Activated CD4-positive, alpha-beta memory T cell treated with anti-CD3 and anti-CD28 coated beads, Interleukin-2, amount 10 ng/mL, durations not matched to agents 7 days and 5 days (primary cell): ENCODE measurements at regions of chr1 and their contacts with region 1.

Region 1: DNA sequence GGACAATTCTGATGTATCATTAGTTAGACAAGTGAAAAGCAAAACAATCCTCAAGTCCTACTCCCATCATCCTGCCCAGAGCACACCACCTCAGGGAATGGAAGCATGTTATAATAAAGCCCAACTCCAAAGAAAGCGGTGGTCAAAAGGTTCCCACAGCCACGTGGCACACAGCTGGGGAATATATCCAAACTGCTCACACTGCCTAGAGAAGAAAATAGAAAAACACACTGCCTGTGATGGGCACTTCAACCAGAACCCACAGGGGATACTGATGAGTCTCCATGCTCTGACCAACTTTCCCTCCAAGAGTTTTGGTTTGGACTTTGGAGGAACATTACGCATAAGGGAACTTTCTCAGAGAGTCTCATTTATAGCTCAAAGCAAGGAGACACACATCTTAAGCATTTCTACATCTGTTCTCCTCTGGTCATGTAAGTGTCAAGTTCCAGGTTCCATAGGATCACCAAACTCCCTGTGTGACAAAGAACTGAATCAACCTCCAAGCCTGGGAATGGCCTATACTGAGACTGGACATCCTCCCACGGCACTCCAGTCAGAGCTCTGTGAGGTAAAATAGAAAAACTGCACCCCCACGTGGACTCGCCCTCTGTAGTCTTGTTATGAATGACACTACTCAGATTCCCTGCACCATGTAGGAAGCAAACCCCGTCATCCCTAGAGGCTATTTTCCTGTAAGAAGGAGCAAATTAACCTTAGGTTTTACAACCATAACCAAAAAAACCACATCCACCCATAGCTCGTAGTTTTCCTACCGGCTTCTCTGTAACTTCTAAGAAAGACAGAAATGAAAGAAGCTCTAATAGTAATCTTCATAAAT is 12.2 kb downstream of the DSTYK start:
- DNase-seq: peak; percentile 24
- H3K4me3 Mint-ChIP-seq: peak overlapping the region; percentile 6
- H3K27ac Mint-ChIP-seq: peak overlapping the region; percentile 9
- H3K4me1 Mint-ChIP-seq: peaks cover 38% of the 10 kb centered on the region
- H3K27me3 Mint-ChIP-seq: no peaks in the 10 kb centered on the region

Region 2: DNA sequence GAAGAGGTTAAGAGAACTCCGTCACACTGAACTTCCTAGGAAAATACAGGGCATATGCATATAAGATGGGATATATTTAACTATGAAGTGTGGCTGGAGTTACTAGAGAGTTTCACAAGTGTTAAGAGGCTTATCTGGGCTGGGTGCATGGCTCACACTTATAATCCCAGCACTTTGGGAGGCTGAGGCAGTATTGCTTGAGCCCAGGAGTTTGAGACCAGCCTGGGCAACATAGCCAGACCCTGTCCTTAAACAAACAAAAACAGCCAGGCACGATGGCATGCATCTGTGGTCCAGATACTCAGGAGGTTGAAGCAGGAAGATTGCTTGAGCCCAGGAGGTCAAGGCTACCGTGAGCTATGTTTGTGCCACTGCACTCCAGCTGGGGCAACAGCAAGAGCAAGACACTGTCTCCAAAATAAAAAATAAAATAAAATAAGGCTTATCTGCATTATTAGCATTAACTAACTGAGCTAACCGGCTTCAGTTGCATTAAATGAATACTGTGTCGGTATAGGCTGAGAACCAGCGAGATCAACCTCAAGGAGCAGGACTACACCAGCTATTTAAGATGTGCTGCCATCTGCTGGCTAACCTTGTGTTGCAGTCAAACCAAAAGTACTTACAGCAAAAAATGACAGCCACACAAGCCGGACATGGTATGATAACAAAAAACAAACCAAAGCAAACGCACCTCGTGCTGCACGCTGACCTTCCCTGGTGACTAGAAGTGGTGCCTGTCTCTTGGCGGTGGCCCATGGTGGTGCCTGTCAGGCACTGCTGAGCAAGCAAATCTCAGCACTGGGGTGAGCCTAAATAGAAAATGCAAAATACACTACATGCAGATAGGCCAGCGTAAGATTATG is 57.8 kb before region 1 on chr1:
- CTCF ChIA-PET with region 1: interaction called, 16 read pairs
- POLR2A ChIA-PET with region 1: no interaction called
- DNase-seq: peak; percentile 80
- H3K4me3 Mint-ChIP-seq: no peak overlapping the region
- H3K27ac Mint-ChIP-seq: no peak overlapping the region
- H3K4me1 Mint-ChIP-seq: peaks cover 4% of the 10 kb centered on the region
- H3K27me3 Mint-ChIP-seq: no peaks in the 10 kb centered on the region

Region 3: GRCh38 chr1:205188098-205188497 is 11.2 kb before region 1 on chr1:
- CTCF ChIA-PET with region 1: interaction called, 13 read pairs
- POLR2A ChIA-PET with region 1: interaction called, 9 read pairs
- DNase-seq: no peak
- H3K4me3 Mint-ChIP-seq: no peak overlapping the region
- H3K27ac Mint-ChIP-seq: no peak overlapping the region
- H3K4me1 Mint-ChIP-seq: peaks cover 64% of the 10 kb centered on the region
- H3K27me3 Mint-ChIP-seq: no peaks in the 10 kb centered on the region

Region 4: GRCh38 chr1:205211169-205211838 is 12.0 kb after region 1 on chr1 and contains the start of gene DSTYK:
- CTCF ChIA-PET with region 1: interaction called, 3 read pairs
- POLR2A ChIA-PET with region 1: interaction called, 11 read pairs
- DNase-seq: peak; percentile 93
- H3K4me3 Mint-ChIP-seq: peak within 1 kb of the TSS; percentile 87
- H3K27ac Mint-ChIP-seq: peak within 1 kb of the TSS; percentile 81
- H3K4me1 Mint-ChIP-seq: peaks cover 41% of the 10 kb centered on the region
- H3K27me3 Mint-ChIP-seq: no peaks in the 10 kb centered on the region
- total RNA-seq, gene DSTYK: 8.8 to 9.2 TPM